Activated T-helper 1 cell treated with anti-CD3 and anti-CD28 coated beads, Interleukin-12 subunit alpha, Interleukin-12 subunit beta, Interleukin-2, Interleukin-4 antibody, amounts not matched to agents 30 ng/mL and 10 ng/mL and 1 ng/mL, durations not matched to agents 14 hours and 24 hours and 36 hours (primary cell): ENCODE measurements at regions of chr7 and their contacts with region 1.

Region 1: DNA sequence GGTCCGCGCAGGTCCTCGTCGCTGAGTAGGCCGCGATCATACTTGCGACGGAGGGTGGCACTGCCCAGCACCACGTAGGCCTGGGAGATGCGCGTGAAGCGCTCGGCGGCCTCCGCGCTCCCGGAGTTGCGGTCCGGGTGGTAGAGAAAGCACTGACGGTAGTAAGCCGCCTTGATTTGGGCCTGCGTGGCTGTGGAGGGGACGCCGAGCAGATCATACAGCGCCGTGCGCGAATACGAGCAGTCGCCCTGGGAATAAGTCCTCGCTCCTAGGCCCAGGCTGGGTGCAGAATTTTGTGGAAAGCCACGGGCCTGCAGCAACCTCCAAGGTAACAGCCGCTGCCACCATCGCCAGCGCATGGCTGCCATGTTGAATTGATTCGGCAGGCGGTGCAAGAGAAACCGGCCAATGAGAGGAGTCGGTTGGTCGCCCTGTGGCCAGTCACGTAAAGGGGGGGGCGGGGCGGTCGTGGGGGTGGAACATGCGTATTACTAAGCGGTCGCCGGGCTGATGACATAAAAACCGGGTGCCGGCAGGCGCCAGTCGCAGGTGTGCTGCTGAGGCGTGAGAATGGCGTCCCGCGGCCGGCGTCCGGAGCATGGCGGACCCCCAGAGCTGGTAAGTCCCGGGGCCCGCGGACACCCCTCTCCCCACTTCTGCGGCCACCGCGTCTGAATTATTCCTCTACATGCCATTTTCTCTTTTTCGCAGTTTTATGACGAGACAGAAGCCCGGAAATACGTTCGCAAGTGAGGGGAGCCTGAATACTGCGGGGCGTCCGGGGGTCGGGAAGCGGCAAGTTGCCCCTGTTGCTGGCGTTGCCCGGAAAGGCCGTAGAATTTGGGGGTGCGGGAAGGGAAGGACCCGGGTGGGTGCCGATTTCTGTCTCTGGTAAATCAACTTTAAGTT is at the starts of genes BUD23 and DNAJC30:
- DNase-seq: peak; percentile 87
- H3K4me3 Mint-ChIP-seq: peak within 1 kb of the TSS; percentile 99
- H3K27ac Mint-ChIP-seq: peak within 1 kb of the TSS; percentile 90
- H3K4me1 Mint-ChIP-seq: peaks cover 26% of the 10 kb centered on the region
- H3K27me3 Mint-ChIP-seq: no peaks in the 10 kb centered on the region
- total RNA-seq, gene BUD23: 128 and 138 TPM in 2 replicates
- total RNA-seq, gene DNAJC30: 11.2 and 11.6 TPM in 2 replicates

Region 2: DNA sequence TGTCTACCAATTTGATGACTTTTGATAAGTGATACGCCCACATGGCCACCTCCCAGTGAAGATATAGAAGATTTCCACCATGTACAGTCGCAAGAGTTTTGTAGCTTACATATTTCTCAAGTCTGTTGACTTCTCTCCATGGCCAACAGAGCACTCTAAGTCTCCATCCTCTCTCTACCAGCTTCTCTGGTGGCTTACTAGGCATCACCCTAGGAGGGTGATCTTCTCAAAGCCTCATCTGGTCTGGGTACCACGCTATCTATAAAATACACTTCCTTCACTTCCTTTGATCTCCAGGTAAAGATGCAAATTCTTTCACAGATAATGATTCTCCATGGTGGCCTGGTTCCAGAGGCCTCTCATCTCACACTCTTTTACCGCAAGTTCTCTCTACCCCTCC is 1321.1 kb before region 1 on chr7:
- intact Hi-C with region 1: no loop called
- DNase-seq: no peak
- H3K4me3 Mint-ChIP-seq: no peak overlapping the region
- H3K27ac Mint-ChIP-seq: no peak overlapping the region
- H3K4me1 Mint-ChIP-seq: no peaks in the 10 kb centered on the region
- H3K27me3 Mint-ChIP-seq: no peaks in the 10 kb centered on the region

Region 3: DNA sequence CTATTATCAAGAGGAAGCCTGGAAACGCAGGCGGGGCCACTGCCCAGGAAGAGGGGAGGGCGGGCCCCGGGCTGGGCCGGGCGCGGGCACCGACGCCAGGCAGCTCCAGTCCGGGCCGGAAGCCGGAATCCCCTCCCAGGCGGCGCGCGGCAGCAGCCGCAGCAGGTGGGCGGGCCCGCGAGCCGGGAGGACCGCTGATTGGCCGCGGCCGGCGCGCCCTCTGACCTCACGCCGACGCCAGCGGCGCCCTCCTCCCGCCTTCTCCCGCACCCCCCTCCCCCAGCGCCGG is 126.3 kb before region 1 on chr7:
- intact Hi-C with region 1: loop called (anchors 1 kb)
- DNase-seq: peak; percentile 92
- H3K4me3 Mint-ChIP-seq: peak overlapping the region; percentile 94
- H3K27ac Mint-ChIP-seq: peak overlapping the region; percentile 79
- H3K4me1 Mint-ChIP-seq: peaks cover 38% of the 10 kb centered on the region
- H3K27me3 Mint-ChIP-seq: peaks cover 8% of the 10 kb centered on the region

Region 4: DNA sequence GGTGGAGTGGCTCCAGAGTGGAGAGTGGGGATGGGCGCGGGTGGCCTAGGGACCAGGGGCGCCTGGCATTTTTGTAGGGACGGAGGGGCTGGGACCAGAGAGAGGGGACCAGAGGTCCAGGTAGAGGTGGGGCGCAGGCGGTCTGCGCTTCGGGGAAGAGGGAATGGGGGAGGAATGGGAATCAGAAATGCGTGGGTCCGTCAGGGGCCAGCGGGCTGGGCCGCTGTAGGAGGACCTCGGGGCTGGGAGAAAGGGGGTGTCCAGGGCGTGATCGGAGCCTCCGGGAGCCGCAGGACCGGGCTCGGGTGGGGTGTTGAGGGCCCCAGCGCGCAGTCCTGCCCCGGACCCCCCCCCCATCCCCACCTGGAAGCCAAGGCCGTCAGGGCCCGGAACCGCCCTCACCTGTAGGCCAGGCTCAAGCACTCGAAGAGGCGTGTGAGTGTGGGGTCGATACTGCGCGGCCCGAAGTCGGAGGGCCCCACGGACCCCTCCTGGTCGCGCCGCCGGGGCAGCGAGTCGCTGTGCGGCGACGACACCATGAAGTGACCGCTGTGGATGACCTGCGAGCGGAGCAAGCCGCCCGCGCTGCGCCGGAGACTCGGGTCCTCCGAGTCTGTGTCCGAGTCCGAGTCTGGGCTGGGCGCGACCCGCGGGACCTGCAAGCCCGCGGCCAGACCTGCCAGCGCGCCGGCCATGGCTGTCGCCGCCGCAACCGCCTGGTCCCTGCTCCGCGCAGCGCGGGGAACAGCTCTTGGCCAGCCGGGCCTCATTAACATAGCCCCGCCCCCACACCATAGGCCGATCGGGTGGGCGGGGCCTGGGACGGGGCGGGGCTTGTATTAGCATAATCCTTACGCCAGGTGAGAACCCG is 59.3 kb before region 1 on chr7 and contains the start of gene MLXIPL:
- intact Hi-C with region 1: loop called (anchors 1 kb)
- DNase-seq: peak; percentile 38
- H3K4me3 Mint-ChIP-seq: no peak within 1 kb of the TSS
- H3K27ac Mint-ChIP-seq: no peak within 1 kb of the TSS
- H3K4me1 Mint-ChIP-seq: no peaks in the 10 kb centered on the region
- H3K27me3 Mint-ChIP-seq: peaks cover 49% of the 10 kb centered on the region
- total RNA-seq, gene MLXIPL: not detected in 2 replicates

Region 5: GRCh38 chr7:73667344-73668102 is 15.8 kb before region 1 on chr7 and contains the start of gene VPS37D:
- intact Hi-C with region 1: loop called (anchors 1 kb)
- DNase-seq: peak; percentile 91
- H3K4me3 Mint-ChIP-seq: peak within 1 kb of the TSS; percentile 78
- H3K27ac Mint-ChIP-seq: no peak within 1 kb of the TSS
- H3K4me1 Mint-ChIP-seq: peaks cover 7% of the 10 kb centered on the region
- H3K27me3 Mint-ChIP-seq: peaks cover 36% of the 10 kb centered on the region
- total RNA-seq, gene VPS37D: 0.18 and 0.34 TPM in 2 replicates

Region 6: DNA sequence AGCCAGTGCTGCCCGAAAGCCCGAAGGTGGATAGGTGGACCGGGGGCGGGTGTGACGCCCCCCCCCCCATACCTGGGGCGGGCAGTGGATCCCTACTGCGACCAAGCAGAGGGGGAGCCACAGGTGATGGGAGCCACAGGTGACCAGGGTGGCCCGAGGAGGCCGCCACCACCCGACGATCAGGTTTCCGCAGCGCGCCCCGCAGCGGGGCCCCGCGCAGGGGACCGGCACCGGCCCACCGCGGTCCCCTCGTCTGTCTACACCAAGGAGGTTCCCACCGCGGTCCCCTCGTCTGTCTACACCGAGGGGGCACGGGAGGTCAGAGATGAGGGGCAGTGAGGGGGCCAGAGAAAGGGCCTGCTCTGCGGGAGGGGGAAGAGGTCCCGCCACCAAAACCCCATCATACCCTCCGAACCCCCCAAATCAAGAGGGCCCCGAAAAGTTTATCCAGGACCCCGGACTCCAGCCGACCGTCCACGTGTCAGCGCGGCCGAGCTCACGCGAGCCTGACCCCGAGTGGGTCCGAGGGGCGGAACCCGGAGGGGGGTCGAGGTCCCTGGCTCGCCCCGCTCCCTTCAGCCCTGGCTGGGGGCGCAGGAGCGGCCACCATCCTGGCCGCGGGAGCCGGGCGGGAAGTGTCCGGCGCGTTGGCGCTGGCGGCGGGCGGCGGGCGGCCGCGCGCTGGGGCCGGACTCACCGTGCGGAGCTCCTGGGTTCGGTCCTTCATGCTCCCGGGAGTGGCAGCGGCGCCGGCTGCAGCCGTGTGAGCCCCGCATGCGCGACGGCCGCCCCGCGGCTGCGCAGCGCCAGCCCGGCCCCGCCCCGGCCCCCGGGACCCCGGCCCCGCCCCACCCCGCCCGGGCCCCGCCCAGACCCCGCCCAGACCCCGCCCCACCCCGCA is 35.8 kb after region 1 on chr7 and contains the start of gene STX1A:
- intact Hi-C with region 1: loop called (anchors 1 kb)
- DNase-seq: peak; percentile 72
- H3K4me3 Mint-ChIP-seq: peak within 1 kb of the TSS; percentile 88
- H3K27ac Mint-ChIP-seq: peak within 1 kb of the TSS; percentile 89
- H3K4me1 Mint-ChIP-seq: peaks cover 34% of the 10 kb centered on the region
- H3K27me3 Mint-ChIP-seq: peaks cover 15% of the 10 kb centered on the region
- total RNA-seq, gene STX1A: 24.9 and 26.7 TPM in 2 replicates

Region 7: GRCh38 chr7:73842247-73842895 is 159.1 kb after region 1 on chr7 and contains the start of gene METTL27:
- intact Hi-C with region 1: loop called (anchors 1 kb)
- DNase-seq: peak; percentile 87
- H3K4me3 Mint-ChIP-seq: peak within 1 kb of the TSS; percentile 83
- H3K27ac Mint-ChIP-seq: peak within 1 kb of the TSS; percentile 73
- H3K4me1 Mint-ChIP-seq: peaks cover 10% of the 10 kb centered on the region
- H3K27me3 Mint-ChIP-seq: peaks cover 10% of the 10 kb centered on the region
- total RNA-seq, gene METTL27: 1.2 and 1.8 TPM in 2 replicates

Region 8: GRCh38 chr7:73960548-73960947 is 277.2 kb after region 1 on chr7:
- intact Hi-C with region 1: no loop called
- DNase-seq: no peak
- H3K4me3 Mint-ChIP-seq: no peak overlapping the region
- H3K27ac Mint-ChIP-seq: no peak overlapping the region
- H3K4me1 Mint-ChIP-seq: no peaks in the 10 kb centered on the region
- H3K27me3 Mint-ChIP-seq: peaks cover 10% of the 10 kb centered on the region

Region 9: DNA sequence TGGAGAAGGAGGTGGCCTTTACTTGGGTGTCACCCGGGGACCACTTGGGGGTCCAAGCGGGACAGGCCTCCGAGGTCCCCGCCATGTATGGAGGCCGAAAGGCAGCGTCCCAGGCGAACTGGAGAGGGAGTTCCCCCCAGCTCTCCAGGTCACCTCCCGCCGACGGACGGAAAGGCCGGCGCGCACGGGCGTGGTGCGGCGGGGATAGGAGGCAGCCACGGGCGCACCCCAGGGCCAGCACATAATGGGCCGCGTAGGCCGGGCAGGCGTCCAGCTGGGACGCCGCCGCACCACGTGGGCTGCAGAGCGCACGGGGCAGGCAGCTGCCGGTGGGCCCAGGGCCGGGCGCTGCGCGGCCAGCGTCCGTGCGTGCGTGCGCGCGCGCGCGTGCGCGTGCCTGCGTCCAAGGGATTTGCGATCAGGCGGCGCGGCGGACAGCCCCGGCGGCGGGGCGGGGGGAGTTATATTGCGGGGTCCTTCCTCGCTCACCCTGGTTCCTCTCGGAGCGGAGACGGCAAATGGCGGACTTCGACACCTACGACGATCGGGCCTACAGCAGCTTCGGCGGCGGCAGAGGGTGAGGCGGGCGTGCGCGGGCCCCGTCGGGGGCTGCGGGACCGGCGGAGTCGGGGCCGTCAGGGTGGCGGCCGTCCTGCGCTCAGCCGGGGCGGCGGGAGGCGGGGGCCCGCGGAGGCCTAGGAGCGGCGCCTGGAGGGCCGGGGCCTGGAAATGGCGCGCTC is 490.7 kb after region 1 on chr7 and contains the start of gene EIF4H:
- intact Hi-C with region 1: loop called (anchors 10 kb)
- DNase-seq: peak; percentile 93
- H3K4me3 Mint-ChIP-seq: peak within 1 kb of the TSS; percentile 94
- H3K27ac Mint-ChIP-seq: peak within 1 kb of the TSS; percentile 90
- H3K4me1 Mint-ChIP-seq: peaks cover 45% of the 10 kb centered on the region
- H3K27me3 Mint-ChIP-seq: peaks cover 3% of the 10 kb centered on the region
- total RNA-seq, gene EIF4H: 343 and 355 TPM in 2 replicates